IMR-90 (cell line): ENCODE measurements at regions of chr12 and their contacts with region 1.

Region 1: GRCh38 chr12:47079468-47079980 is at the starts of genes AMIGO2 and PCED1B:
- DNase-seq: peak; percentile 72
- ATAC-seq: peak; percentile 74
- H3K4me3 ChIP-seq: peak within 1 kb of the TSS; percentile 91
- H3K27ac ChIP-seq: peak within 1 kb of the TSS; percentile 57
- H3K4me1 ChIP-seq: peaks cover 17% of the 10 kb centered on the region
- H3K27me3 ChIP-seq: no peaks in the 10 kb centered on the region
- CTCF ChIP-seq: peak; percentile 57
- POLR2A ChIP-seq: no peak
- RAD21 ChIP-seq: peak; percentile 73
- total RNA-seq, gene AMIGO2: 31.7 and 32.6 TPM in 2 replicates
- total RNA-seq, gene PCED1B: 0.28 and 0.36 TPM in 2 replicates

Region 2: DNA sequence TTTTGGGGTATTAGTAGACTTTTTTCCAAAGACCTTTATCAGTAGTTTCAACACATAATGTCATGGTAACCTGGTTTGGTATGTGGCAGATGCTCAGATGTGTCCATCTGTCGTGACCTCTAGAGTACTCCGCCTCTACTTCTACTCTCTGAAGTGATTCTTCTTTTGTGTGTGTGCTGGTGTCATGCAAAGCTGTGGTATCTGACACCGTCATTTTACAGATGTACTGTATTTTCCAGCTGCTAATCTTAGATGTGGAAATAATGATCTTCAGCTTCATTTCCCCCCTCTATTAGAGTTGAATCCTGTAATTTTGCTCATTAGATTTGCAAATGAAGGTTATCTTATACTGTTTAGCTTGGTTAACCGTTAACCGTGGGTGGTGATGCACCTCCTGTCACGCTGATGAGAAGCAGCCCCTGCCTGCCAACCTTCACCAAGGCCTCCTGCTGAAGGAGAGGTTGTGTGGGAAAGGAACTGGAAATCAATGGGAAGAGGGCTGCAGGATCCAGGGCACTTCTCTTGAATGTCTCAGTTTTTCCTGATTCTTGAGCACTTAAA is 222.7 kb after region 1 on chr12:
- CTCF ChIA-PET with region 1: no interaction called
- POLR2A ChIA-PET with region 1: no interaction called
- dilution Hi-C with region 1: no loop called
- in situ Hi-C with region 1: no loop called
- intact Hi-C with region 1: loop called (anchors 1 kb)
- DNase-seq: no peak
- ATAC-seq: no peak
- H3K4me3 ChIP-seq: no peak overlapping the region
- H3K27ac ChIP-seq: no peak overlapping the region
- H3K4me1 ChIP-seq: peaks cover 7% of the 10 kb centered on the region
- H3K27me3 ChIP-seq: no peaks in the 10 kb centered on the region
- CTCF ChIP-seq: no peak
- POLR2A ChIP-seq: no peak
- RAD21 ChIP-seq: no peak

Region 3: DNA sequence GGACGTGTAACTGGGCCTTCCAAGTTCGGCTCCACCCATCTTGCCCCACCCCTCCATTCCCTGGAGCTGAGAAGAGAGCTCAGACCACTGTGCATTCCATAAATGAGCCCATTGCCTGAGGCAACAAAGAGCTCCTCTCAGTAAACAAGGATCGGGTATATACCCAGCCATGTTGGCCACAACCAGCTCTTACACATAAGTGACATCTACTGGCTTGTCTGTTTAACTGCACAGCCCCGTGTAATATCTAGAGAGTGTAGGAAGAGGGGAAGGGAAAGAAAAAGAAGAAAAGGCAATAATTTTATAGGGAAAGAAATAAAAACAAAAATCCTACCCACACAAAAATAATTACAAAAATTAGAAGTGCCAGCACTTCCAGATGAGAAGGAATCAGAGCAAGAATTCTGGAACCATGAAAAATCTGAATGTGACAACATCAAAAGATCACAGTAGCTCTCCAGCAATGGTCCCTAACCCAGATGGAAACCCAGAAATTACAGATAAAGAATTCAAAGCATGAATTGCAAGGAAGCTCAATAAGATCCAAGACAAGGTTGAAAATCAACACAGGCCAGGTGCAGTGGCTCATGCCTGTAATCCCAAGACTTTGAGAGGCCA is 318.2 kb after region 1 on chr12:
- CTCF ChIA-PET with region 1: interaction called, 4 read pairs
- POLR2A ChIA-PET with region 1: no interaction called
- dilution Hi-C with region 1: no loop called
- in situ Hi-C with region 1: loop called (anchors 10 kb)
- intact Hi-C with region 1: loop called (anchors 5 kb)
- DNase-seq: peak; percentile 76
- ATAC-seq: peak; percentile 80
- H3K4me3 ChIP-seq: no peak overlapping the region
- H3K27ac ChIP-seq: no peak overlapping the region
- H3K4me1 ChIP-seq: peaks cover 4% of the 10 kb centered on the region; the same call in 1 of the 2 replicates
- H3K27me3 ChIP-seq: no peaks in the 10 kb centered on the region
- CTCF ChIP-seq: peak; percentile 60
- POLR2A ChIP-seq: no peak
- RAD21 ChIP-seq: peak; percentile 81